CD4-positive, alpha-beta memory T cell (primary cell): ENCODE measurements at regions of chr3 and their contacts with region 1.

Region 1: DNA sequence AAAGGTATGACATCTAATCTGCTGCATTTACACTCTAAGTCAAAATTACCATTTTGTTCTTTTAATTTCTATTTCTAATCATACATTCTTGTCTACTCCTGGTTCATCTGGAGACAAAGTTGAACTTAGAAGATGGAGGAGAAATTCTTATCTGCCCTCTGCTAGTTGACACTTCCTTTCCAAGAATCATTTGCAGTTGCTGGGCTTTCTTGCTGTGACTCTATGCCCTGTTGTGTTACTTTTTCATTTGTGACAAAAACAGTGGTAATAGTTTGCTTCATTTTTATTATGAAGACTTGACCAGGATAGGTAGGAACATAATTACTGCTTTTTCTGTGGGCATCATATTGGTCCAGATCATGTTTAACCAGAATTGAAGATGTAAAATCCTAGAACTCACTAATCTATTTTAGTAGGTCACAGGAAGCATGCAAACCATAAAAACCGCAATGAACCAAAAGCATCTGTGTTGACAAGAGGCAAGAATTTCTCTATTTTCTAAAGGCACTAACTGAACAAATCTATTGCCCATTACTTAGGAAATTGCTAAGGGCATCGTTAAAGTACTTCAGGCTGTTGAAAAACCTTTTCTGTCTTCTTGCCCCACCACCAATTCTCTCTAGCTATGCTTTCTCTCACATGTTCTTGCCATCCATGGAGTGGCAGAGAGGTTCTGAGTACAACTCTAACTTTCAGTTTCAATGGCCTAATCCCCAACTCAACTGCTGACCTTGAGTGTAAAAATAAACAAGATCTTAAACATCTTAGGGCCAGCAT is 4.2 kb upstream of the CCR2 start:
- DNase-seq: peak; percentile 37 to 57 (median 54)
- H3K4me3 ChIP-seq: no peak overlapping the region
- H3K4me3 Mint-ChIP-seq: peak overlapping the region; percentile 53 to 82 (median 71)
- H3K27ac ChIP-seq: peak overlapping the region; percentile 10
- H3K27ac Mint-ChIP-seq: peak overlapping the region; percentile 65 to 91 (median 88)
- H3K4me1 ChIP-seq: peaks cover 70% of the 10 kb centered on the region
- H3K4me1 Mint-ChIP-seq: peaks cover 49 to 78% (median 69%) of the 10 kb centered on the region in 4 donors
- H3K27me3 ChIP-seq: no peaks in the 10 kb centered on the region
- H3K27me3 Mint-ChIP-seq: no peaks in the 10 kb centered on the region

Region 2: GRCh38 chr3:46284981-46285683 is 64.5 kb before region 1 on chr3:
- CTCF ChIA-PET with region 1: interaction called, 3 read pairs
- POLR2A ChIA-PET with region 1: interaction called, 33 read pairs
- intact Hi-C with region 1: no loop called
- DNase-seq: peak; percentile 63 to 92 (median 69)
- H3K4me3 ChIP-seq: no peak overlapping the region
- H3K4me3 Mint-ChIP-seq: peak overlapping the region in 7 of 8 donors; percentile 4 to 73 (median 62)
- H3K27ac ChIP-seq: peak overlapping the region; percentile 41
- H3K27ac Mint-ChIP-seq: peak overlapping the region; percentile 59 to 93 (median 87)
- H3K4me1 ChIP-seq: peaks cover 78% of the 10 kb centered on the region
- H3K4me1 Mint-ChIP-seq: peaks cover 56 to 92% (median 66%) of the 10 kb centered on the region in 4 donors
- H3K27me3 ChIP-seq: no peaks in the 10 kb centered on the region
- H3K27me3 Mint-ChIP-seq: no peaks in the 10 kb centered on the region

Region 3: GRCh38 chr3:46297658-46298463 is 51.8 kb before region 1 on chr3:
- CTCF ChIA-PET with region 1: interaction called, 4 read pairs
- POLR2A ChIA-PET with region 1: interaction called, 11 read pairs
- intact Hi-C with region 1: no loop called
- DNase-seq: no peak
- H3K4me3 ChIP-seq: no peak overlapping the region
- H3K4me3 Mint-ChIP-seq: peak overlapping the region in 7 of 8 donors; percentile 3 to 79 (median 37)
- H3K27ac ChIP-seq: peak overlapping the region; percentile 25
- H3K27ac Mint-ChIP-seq: peak overlapping the region; percentile 69 to 91 (median 79)
- H3K4me1 ChIP-seq: peaks cover 86% of the 10 kb centered on the region
- H3K4me1 Mint-ChIP-seq: peaks cover 68 to 97% (median 86%) of the 10 kb centered on the region in 4 donors
- H3K27me3 ChIP-seq: no peaks in the 10 kb centered on the region
- H3K27me3 Mint-ChIP-seq: no peaks in the 10 kb centered on the region

Region 4: GRCh38 chr3:46359733-46360493 is 10.2 kb after region 1 on chr3:
- CTCF ChIA-PET with region 1: interaction called, 7 read pairs
- POLR2A ChIA-PET with region 1: interaction called, 9 read pairs
- intact Hi-C with region 1: loop called (anchors 1 kb)
- DNase-seq: peak in 1 of 5 donors; percentile 72
- H3K4me3 ChIP-seq: no peak overlapping the region
- H3K4me3 Mint-ChIP-seq: peak overlapping the region in 7 of 8 donors; percentile 43 to 95 (median 86)
- H3K27ac ChIP-seq: peak overlapping the region; percentile 46
- H3K27ac Mint-ChIP-seq: peak overlapping the region; percentile 73 to 94 (median 91)
- H3K4me1 ChIP-seq: peaks cover 71% of the 10 kb centered on the region
- H3K4me1 Mint-ChIP-seq: peaks cover 37 to 91% (median 69%) of the 10 kb centered on the region in 4 donors
- H3K27me3 ChIP-seq: no peaks in the 10 kb centered on the region
- H3K27me3 Mint-ChIP-seq: no peaks in the 10 kb centered on the region